Gastrocnemius medialis (tissue), 4 donors: ENCODE measurements at regions of chr5 and their contacts with region 1.

Region 1: GRCh38 chr5:140632150-140633020 is 590 bp downstream of the CD14 start:
- DNase-seq: peak; percentile 24 to 66
- ATAC-seq: peak; percentile 75 to 76
- H3K4me3 ChIP-seq: peak overlapping the region; percentile 55 to 67 (median 60)
- H3K27ac ChIP-seq: peak overlapping the region; percentile 70 to 78 (median 75)
- H3K4me1 ChIP-seq: peaks cover 8 to 13% of the 10 kb centered on the region in 2 donors
- H3K27me3 ChIP-seq: no peaks in the 10 kb centered on the region
- CTCF ChIP-seq: no peak
- POLR2A ChIP-seq: peak; percentile 15 to 47

Region 2: DNA sequence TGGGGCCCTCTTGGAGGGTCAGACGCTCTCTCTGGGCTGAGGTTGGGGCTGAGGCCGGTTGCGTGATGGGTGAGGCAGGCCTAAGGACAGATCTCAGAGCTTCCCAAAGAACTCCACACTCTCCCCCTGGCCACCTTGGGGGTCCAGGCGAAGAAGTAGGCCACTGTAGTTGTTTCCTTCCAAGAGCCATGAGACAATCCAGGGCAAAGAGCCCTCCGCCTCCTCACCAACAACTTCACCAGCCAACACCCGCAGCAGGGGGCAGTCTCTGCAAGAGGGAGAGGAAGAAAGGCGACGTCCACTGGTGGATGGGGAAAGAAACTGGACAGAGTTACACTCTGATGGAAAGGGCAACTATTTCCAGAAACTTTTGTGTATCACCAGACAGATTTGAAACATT is 57.1 kb before region 1 on chr5:
- in situ Hi-C with region 1: loop called in 3 of 4 experiments (anchors 5 to 10 kb)
- intact Hi-C with region 1: no loop called
- DNase-seq: peak in 1 of 2 donors; percentile 63
- ATAC-seq: peak in 1 of 2 donors; percentile 66
- H3K4me3 ChIP-seq: no peak overlapping the region
- H3K27ac ChIP-seq: peak overlapping the region in 1 of 4 donors; percentile 63
- H3K4me1 ChIP-seq: peaks cover 28% of the 10 kb centered on the region in 2 donors
- H3K27me3 ChIP-seq: no peaks in the 10 kb centered on the region
- CTCF ChIP-seq: peak in 2 of 5 experiments; percentile 34 to 36
- POLR2A ChIP-seq: no peak

Region 3: GRCh38 chr5:140609126-140609525 is 23.3 kb before region 1 on chr5:
- in situ Hi-C with region 1: no loop called
- intact Hi-C with region 1: no loop called
- DNase-seq: peak; percentile 21 to 33
- ATAC-seq: peak in 1 of 2 donors; percentile 36
- H3K4me3 ChIP-seq: no peak overlapping the region
- H3K27ac ChIP-seq: peak overlapping the region in 1 of 4 donors; percentile 28
- H3K4me1 ChIP-seq: no peaks in the 10 kb centered on the region
- H3K27me3 ChIP-seq: no peaks in the 10 kb centered on the region
- CTCF ChIP-seq: no peak
- POLR2A ChIP-seq: peak in 1 of 2 donors; percentile 19

Region 4: GRCh38 chr5:140664359-140665119 is 32.2 kb after region 1 on chr5 and contains the start of gene WDR55:
- in situ Hi-C with region 1: no loop called
- intact Hi-C with region 1: no loop called
- DNase-seq: peak; percentile 94 to 96
- ATAC-seq: peak; percentile 95
- H3K4me3 ChIP-seq: peak within 1 kb of the TSS; percentile 79 to 90 (median 82)
- H3K27ac ChIP-seq: peak within 1 kb of the TSS; percentile 92 to 98 (median 98)
- H3K4me1 ChIP-seq: peaks cover 16 to 20% of the 10 kb centered on the region in 2 donors
- H3K27me3 ChIP-seq: no peaks in the 10 kb centered on the region
- CTCF ChIP-seq: no peak
- POLR2A ChIP-seq: peak; percentile 76 to 84
- total RNA-seq, gene WDR55: 10.9 to 18.7 (median 15.1) TPM